Activated T-helper 1 cell treated with anti-CD3 and anti-CD28 coated beads, Interleukin-12 subunit alpha, Interleukin-12 subunit beta, Interleukin-2, Interleukin-4 antibody, amounts not matched to agents 30 ng/mL and 10 ng/mL and 1 ng/mL, durations not matched to agents 14 hours and 24 hours and 36 hours (primary cell): ENCODE measurements at regions of chr3 and their contacts with region 1.

Region 1: GRCh38 chr3:105774444-105775180 is 94.2 kb downstream of the CBLB start:
- DNase-seq: no peak
- H3K4me3 Mint-ChIP-seq: no peak overlapping the region
- H3K27ac Mint-ChIP-seq: peak overlapping the region; percentile 76
- H3K4me1 Mint-ChIP-seq: peaks cover 71% of the 10 kb centered on the region
- H3K27me3 Mint-ChIP-seq: no peaks in the 10 kb centered on the region

Region 2: GRCh38 chr3:105798381-105798934 is 23.8 kb after region 1 on chr3:
- intact Hi-C with region 1: loop called (anchors 1 kb)
- DNase-seq: no peak
- H3K4me3 Mint-ChIP-seq: peak overlapping the region; percentile 50
- H3K27ac Mint-ChIP-seq: peak overlapping the region; percentile 57
- H3K4me1 Mint-ChIP-seq: peaks cover 72% of the 10 kb centered on the region
- H3K27me3 Mint-ChIP-seq: no peaks in the 10 kb centered on the region

Region 3: DNA sequence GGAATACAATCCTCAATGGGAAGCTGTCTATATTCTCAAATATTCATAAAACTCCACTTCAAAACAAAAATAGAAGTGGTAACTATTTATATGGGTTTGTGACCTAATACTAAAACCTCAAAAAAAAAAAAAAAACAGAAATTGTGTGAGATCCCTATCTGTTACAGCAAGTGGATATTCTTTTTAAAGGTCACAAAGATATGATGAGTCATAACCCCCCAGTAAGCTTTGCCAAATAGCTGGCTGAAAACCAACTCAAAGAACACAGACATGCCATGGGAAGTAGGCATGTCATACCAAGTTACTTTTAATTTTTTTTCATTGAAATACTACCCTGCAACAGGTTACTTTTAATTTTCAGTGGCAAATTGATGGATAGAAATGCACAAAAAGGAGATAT is 31.7 kb after region 1 on chr3:
- intact Hi-C with region 1: loop called (anchors 1 kb)
- DNase-seq: no peak
- H3K4me3 Mint-ChIP-seq: peak overlapping the region; percentile 40
- H3K27ac Mint-ChIP-seq: peak overlapping the region; percentile 84
- H3K4me1 Mint-ChIP-seq: peaks cover 67% of the 10 kb centered on the region
- H3K27me3 Mint-ChIP-seq: no peaks in the 10 kb centered on the region

Region 4: DNA sequence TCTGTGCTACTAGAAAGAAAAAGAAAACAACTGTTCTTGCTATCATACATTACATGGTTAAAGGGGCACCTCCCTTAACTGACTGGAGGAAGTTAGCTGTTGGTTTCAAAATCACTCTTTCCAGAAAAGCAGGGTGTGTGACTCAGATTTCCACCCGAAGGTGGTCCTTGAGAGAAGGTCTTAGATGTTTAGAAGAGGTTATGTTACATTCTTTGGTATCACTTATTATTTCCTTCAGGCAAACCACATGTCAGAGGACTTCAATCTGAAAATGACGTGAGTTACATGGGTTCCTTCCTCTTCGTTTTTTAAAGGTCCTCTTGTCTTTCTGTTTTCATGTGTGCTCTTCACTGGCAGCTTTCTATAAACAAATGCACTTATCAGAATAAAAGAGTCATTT is 402.1 kb after region 1 on chr3:
- intact Hi-C with region 1: no loop called
- DNase-seq: peak; percentile 68
- H3K4me3 Mint-ChIP-seq: peak overlapping the region; percentile 75
- H3K27ac Mint-ChIP-seq: peak overlapping the region; percentile 92
- H3K4me1 Mint-ChIP-seq: peaks cover 70% of the 10 kb centered on the region
- H3K27me3 Mint-ChIP-seq: no peaks in the 10 kb centered on the region